Endothelial cell of umbilical vein (primary cell): ENCODE measurements at regions of chr2 and their contacts with region 1.

Region 1: GRCh38 chr2:96305091-96305978 is at the start of gene SNRNP200:
- DNase-seq: peak; percentile 74
- H3K4me3 ChIP-seq: peak within 1 kb of the TSS; percentile 60 to 81 (median 78)
- H3K27ac ChIP-seq: peak within 1 kb of the TSS; percentile 63
- H3K4me1 ChIP-seq: peaks cover 11% of the 10 kb centered on the region
- H3K27me3 ChIP-seq: no peaks in the 10 kb centered on the region
- CTCF ChIP-seq: no peak
- POLR2A ChIP-seq: peak; percentile 58
- total RNA-seq, gene SNRNP200: 117 and 124 TPM in 2 replicates

Region 2: DNA sequence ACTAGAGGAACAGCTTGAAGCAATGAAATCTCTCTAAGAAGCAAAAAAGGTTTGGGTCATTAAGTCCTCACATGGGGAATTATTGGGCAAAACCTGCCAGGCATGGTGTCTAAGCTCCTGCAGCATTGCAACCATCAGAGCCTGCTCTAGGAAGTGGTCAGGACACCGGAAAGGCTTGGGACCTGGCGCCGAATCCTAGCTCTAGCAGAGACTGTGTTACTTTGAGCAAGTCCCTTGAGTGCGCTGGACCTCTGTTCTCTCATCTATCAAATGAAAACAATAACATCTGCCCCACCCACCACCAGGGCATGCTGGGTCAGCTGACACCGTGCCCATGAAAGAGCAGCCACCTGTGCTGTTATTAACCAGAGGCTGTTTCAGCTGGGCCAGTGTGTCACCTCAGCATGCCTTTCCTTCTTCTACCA is 45.8 kb before region 1 on chr2:
- CTCF ChIA-PET with region 1: no interaction called
- POLR2A ChIA-PET with region 1: no interaction called
- dilution Hi-C with region 1: no loop called
- intact Hi-C with region 1: no loop called
- DNase-seq: no peak
- H3K4me3 ChIP-seq: no peak overlapping the region
- H3K27ac ChIP-seq: peak overlapping the region; percentile 76
- H3K4me1 ChIP-seq: peaks cover 54% of the 10 kb centered on the region
- H3K27me3 ChIP-seq: no peaks in the 10 kb centered on the region
- CTCF ChIP-seq: no peak
- POLR2A ChIP-seq: no peak

Region 3: DNA sequence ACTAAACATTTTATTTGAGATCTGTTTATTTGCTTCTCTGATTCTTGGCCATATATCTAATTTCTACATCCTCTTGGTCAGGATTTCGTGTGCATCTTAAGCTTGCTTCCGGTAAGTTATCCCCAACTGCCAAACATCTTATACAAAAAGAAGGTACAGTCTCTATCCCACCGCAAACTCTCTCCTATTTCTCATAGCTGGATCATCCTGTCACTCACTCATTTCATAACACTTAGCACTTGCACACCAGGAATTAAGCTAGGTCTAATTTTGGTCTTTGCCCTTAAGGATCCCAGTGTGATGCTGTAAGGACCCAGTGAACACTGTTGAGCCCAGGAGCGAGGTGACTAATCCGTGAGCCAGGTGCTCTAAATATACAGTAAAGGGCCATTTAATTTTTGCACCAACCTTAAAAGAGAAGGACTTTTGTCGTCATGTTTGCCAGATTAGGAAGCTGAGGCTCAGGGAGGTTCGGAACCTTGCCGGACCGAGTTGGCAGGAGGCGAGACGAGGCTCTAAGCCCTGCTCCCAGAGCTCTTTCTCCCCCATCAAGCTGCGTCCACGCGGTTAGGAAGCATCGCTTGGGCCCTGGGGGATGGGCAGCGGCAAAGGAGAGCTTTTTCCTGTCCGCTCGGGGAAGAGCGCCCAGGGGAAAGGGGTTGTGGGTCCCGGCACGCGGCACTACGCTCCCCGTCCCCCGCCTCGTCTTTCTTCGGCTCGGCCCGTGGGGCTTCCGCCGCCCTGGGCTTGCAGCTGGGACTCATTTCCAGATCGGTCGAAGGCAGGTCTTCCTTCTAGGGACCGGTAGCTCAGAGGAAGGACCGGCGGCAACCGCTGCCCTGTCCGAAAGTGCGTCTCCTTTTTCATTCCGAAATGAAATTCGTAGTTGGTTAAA is 15.6 kb after region 1 on chr2:
- CTCF ChIA-PET with region 1: interaction called, 4 read pairs
- POLR2A ChIA-PET with region 1: interaction called, 3 read pairs
- dilution Hi-C with region 1: no loop called
- intact Hi-C with region 1: loop called (anchors 2 kb)
- DNase-seq: peak; percentile 52
- H3K4me3 ChIP-seq: peak overlapping the region; percentile 63 to 83 (median 79)
- H3K27ac ChIP-seq: no peak overlapping the region
- H3K4me1 ChIP-seq: peaks cover 28% of the 10 kb centered on the region
- H3K27me3 ChIP-seq: peaks cover 10 to 15% of the 10 kb centered on the region in 2 experiments
- CTCF ChIP-seq: no peak
- POLR2A ChIP-seq: no peak

Region 4: GRCh38 chr2:96330407-96330806 is 25.1 kb after region 1 on chr2:
- CTCF ChIA-PET with region 1: no interaction called
- POLR2A ChIA-PET with region 1: interaction called, 4 read pairs
- dilution Hi-C with region 1: no loop called
- intact Hi-C with region 1: loop called (anchors 1 kb)
- DNase-seq: no peak
- H3K4me3 ChIP-seq: no peak overlapping the region
- H3K27ac ChIP-seq: no peak overlapping the region
- H3K4me1 ChIP-seq: peaks cover 10% of the 10 kb centered on the region
- H3K27me3 ChIP-seq: no peaks in the 10 kb centered on the region
- CTCF ChIP-seq: no peak
- POLR2A ChIP-seq: no peak

Region 5: DNA sequence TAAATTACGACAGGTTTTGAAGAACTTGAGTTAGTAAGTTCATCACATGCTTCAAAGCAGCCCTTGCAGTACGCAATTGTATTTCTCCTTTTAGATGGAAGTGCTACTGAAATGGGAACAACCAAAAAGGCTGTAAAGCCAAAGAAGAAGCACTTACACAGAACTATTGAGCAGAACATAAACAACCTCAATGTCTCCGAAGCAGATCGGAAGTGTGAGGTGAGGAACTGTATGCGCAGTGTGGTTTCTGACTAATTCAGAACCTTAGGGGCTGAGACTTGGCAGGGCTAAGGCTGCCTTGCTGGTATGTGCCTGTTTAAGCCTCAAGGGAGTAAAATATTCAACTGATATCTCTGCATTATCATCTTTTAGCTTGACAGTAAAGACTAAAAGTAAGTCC is 38.7 kb after region 1 on chr2:
- CTCF ChIA-PET with region 1: no interaction called
- POLR2A ChIA-PET with region 1: no interaction called
- dilution Hi-C with region 1: no loop called
- intact Hi-C with region 1: loop called (anchors 2 kb)
- DNase-seq: no peak
- H3K4me3 ChIP-seq: no peak overlapping the region
- H3K27ac ChIP-seq: no peak overlapping the region
- H3K4me1 ChIP-seq: no peaks in the 10 kb centered on the region
- H3K27me3 ChIP-seq: no peaks in the 10 kb centered on the region
- CTCF ChIP-seq: no peak
- POLR2A ChIP-seq: no peak